H1 (cell line): ENCODE measurements at regions of chr11 and their contacts with region 1.

Region 1: GRCh38 chr11:103586756-103587155 is 449.7 kb upstream of the DDI1 start:
- DNase-seq: no peak
- H3K4me3 ChIP-seq: no peak overlapping the region
- H3K27ac ChIP-seq: no peak overlapping the region
- H3K4me1 ChIP-seq: no peaks in the 10 kb centered on the region
- H3K27me3 ChIP-seq: no peaks in the 10 kb centered on the region
- CTCF ChIP-seq: no peak
- EP300 ChIP-seq: no peak
- POLR2A ChIP-seq: no peak
- RAD21 ChIP-seq: no peak

Region 2: GRCh38 chr11:103257360-103257759 is 329.4 kb before region 1 on chr11:
- CTCF ChIA-PET with region 1: interaction called, 10 read pairs
- POLR2A ChIA-PET with region 1: no interaction called
- DNase-seq: no peak
- H3K4me3 ChIP-seq: no peak overlapping the region
- H3K27ac ChIP-seq: no peak overlapping the region
- H3K4me1 ChIP-seq: no peaks in the 10 kb centered on the region
- H3K27me3 ChIP-seq: no peaks in the 10 kb centered on the region
- CTCF ChIP-seq: peak in 2 of 3 experiments; percentile 51 to 62; a peak in 3 of 4 replicates
- EP300 ChIP-seq: no peak
- POLR2A ChIP-seq: no peak
- RAD21 ChIP-seq: peak; percentile 62 to 69

Region 3: DNA sequence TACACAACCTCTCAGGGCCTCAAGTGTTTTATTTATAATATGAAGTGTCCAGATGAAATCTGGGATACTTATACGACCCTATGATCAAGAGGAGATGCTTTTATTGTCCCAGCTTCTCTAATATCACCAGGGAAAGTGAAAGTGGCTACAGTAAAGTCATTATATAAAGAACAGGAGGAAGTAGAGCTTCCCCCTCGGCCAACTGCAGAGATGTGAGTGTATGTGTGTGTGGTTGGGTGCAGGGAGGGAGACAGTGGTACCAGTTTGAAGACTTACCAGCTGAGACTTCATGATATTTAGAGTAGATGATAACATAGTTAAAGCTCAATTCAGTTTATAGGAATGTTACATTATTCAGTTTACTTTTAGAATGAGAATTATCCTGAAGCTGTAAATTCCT is 76.1 kb after region 1 on chr11:
- CTCF ChIA-PET with region 1: no interaction called
- POLR2A ChIA-PET with region 1: no interaction called
- DNase-seq: no peak
- H3K4me3 ChIP-seq: no peak overlapping the region
- H3K27ac ChIP-seq: no peak overlapping the region
- H3K4me1 ChIP-seq: no peaks in the 10 kb centered on the region
- H3K27me3 ChIP-seq: no peaks in the 10 kb centered on the region
- CTCF ChIP-seq: no peak
- EP300 ChIP-seq: no peak
- POLR2A ChIP-seq: no peak
- RAD21 ChIP-seq: no peak